PC-9 (cell line): ENCODE measurements at regions of chr5 and their contacts with region 1.

Region 1: DNA sequence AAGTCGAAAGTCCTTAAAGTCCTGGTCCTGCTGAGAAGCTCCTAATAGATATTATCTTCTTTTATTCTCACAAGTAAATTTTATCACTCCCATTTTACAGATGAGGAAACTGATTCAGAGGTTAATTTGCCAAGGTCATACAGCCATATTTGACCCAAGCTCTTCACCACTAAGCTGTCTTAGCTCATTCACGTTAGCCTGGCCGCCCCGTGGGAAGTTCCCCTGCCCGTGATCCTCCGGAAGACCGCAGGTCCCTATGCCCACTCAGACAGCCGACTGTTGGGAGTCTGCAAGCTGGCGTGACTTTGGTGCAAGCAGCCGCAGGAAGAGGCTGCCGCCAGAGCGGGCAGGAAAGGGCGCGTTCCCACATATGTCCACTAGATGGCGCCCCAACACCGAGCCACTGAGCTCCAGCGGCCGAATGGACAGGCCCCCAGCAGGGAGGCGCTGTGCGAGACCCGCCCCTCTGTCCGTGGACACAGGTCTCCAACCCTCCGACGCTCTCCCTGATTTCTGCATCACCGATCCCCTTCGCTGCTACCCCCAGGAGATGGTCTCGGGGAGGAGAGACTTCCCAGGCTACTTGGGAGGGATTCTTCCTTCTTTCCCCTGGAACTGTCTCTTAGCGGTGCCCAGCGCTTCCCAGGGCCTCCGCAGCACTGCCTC is 10.0 kb upstream of the ARAP3 start:
- DNase-seq: peak; percentile 71 to 89
- H3K4me3 ChIP-seq: peak overlapping the region; percentile 46; the same call in 1 of the 2 replicates
- H3K27ac ChIP-seq: no peak overlapping the region
- H3K4me1 ChIP-seq: peaks cover 48% of the 10 kb centered on the region
- H3K27me3 ChIP-seq: no peaks in the 10 kb centered on the region
- CTCF ChIP-seq: peak; percentile 93

Region 2: GRCh38 chr5:141636413-141637122 is 55.4 kb before region 1 on chr5 and contains the starts of genes HDAC3 and RELL2:
- CTCF ChIA-PET with region 1: no interaction called
- POLR2A ChIA-PET with region 1: no interaction called
- intact Hi-C with region 1: no loop called
- DNase-seq: peak; percentile 70 to 95
- H3K4me3 ChIP-seq: peak within 1 kb of the TSS; percentile 79
- H3K27ac ChIP-seq: no peak within 1 kb of the TSS
- H3K4me1 ChIP-seq: peaks cover 23% of the 10 kb centered on the region
- H3K27me3 ChIP-seq: no peaks in the 10 kb centered on the region
- CTCF ChIP-seq: no peak
- total RNA-seq, gene HDAC3: 76.0 and 87.0 TPM in 2 replicates
- total RNA-seq, gene RELL2: 3.3 and 5.0 TPM in 2 replicates

Region 3: GRCh38 chr5:141664732-141665461 is 27.1 kb before region 1 on chr5:
- CTCF ChIA-PET with region 1: no interaction called
- POLR2A ChIA-PET with region 1: no interaction called
- intact Hi-C with region 1: loop called (anchors 1 kb)
- DNase-seq: peak; percentile 44 to 74
- H3K4me3 ChIP-seq: no peak overlapping the region
- H3K27ac ChIP-seq: no peak overlapping the region
- H3K4me1 ChIP-seq: no peaks in the 10 kb centered on the region
- H3K27me3 ChIP-seq: no peaks in the 10 kb centered on the region
- CTCF ChIP-seq: peak; percentile 93

Region 4: GRCh38 chr5:141805874-141806595 is 114.0 kb after region 1 on chr5:
- CTCF ChIA-PET with region 1: interaction called, 10 read pairs
- POLR2A ChIA-PET with region 1: no interaction called
- intact Hi-C with region 1: no loop called
- DNase-seq: no peak
- H3K4me3 ChIP-seq: no peak overlapping the region
- H3K27ac ChIP-seq: no peak overlapping the region
- H3K4me1 ChIP-seq: 0 out of 2 replicates have a peak, but pooled peaks cover 5% of the 10 kb centered on the region
- H3K27me3 ChIP-seq: no peaks in the 10 kb centered on the region
- CTCF ChIP-seq: no peak